ENCODE measurements at regions of chr1 and their contacts with region 1.

Region 1: DNA sequence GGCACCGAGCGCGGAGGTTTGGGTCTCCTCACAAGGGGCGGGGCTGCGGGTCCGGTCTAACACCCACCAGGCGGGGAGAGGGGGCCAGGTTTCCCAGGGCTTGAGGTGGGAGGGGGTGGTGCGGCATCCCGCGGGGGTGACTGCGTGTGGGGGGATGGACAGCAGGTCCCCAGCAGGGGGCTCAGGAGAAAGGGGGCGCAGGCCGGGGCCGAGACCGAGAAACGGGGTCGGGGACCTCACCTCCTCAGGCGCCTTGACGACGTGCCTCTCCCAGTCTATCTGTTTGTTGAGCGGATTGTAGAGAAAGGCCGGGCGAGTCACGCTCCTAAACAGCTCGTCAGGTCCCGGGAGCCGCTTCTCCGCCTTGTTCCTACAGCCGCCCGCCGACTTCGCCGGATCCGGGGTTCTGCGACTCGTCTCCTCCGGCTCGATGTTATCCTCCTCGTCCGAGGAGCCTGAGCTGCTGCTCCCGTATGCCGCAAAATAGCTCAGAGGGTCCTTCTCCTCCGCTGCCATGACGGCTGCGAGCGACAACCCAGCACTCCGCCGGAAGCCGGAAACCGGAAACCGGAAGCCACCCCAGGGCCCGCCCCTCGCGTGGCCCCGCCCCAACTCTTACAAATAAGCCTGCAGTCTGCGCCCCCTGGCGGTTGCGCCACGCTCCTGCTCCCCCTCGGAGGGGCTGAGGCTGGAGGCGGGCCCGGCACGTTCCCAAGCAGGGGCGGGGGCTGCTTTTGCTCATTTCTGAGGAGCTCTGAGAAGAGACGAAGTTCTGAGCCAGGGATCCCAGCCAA is at the start of gene C1orf52:
- DNase-seq: peak; percentile 98
- ATAC-seq: peak; percentile 98
- total RNA-seq, gene C1orf52: 18.7 TPM

Region 2: GRCh38 chr1:84944767-84945486 is 314.4 kb before region 1 on chr1:
- intact Hi-C with region 1: loop called (anchors 5 kb)
- DNase-seq: peak; percentile 38
- ATAC-seq: peak; percentile 98

Region 3: DNA sequence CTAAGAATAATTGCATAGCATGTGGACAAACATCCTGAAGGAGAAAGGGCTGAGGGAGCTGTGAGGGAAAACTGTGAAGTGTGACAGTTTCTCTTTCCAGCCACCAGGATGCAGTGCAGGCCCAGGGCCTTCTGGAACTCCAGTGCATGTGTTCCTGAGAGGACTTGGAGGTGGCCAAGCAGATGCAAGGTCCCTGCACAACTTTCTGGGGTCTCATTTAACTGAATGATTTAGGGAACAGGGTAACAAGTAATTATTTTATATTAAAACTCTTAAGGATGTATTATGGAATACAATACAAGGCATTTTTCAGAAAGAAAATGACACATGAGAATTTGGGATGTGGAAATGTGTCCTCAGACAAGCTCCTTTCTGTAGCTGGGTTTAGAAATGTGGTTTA is 149.8 kb before region 1 on chr1:
- intact Hi-C with region 1: loop called (anchors 5 kb)
- DNase-seq: peak; percentile 64
- ATAC-seq: peak; percentile 92